ENCODE measurements at regions of chr3 and their contacts with region 1.

Region 1: DNA sequence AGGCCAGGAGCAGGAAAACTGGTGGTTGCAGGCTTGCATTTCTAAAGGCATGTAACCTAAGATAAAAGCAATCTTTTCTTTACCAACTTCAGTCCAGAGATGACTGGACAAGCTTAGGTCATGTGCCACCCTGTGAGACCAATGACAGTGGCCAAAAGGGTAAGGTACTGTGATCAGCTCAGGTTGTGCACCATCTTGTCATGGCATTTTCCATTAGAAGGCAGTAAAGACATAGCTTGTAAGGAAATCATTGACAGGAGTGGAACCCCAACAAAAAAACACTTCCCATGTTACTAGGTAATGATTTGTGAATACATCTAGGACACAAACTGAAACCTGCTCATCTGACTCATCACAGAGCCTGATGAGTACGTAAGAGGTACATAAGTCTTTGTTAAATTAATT is 35.2 kb downstream of the SSR3 start:
- DNase-seq: peak; percentile 25
- ATAC-seq: peak; percentile 70
- H3K4me3 Mint-ChIP-seq: no peak overlapping the region
- H3K27ac Mint-ChIP-seq: no peak overlapping the region
- H3K4me1 Mint-ChIP-seq: peaks cover 19% of the 10 kb centered on the region
- H3K27me3 Mint-ChIP-seq: peaks cover 19% of the 10 kb centered on the region
- CTCF ChIP-seq: no peak

Region 2: GRCh38 chr3:156483961-156484787 is 35.6 kb before region 1 on chr3:
- CTCF ChIA-PET with region 1: interaction called, 5 read pairs
- POLR2A ChIA-PET with region 1: no interaction called
- intact Hi-C with region 1: loop called (anchors 5 kb)
- DNase-seq: peak; percentile 67
- ATAC-seq: peak; percentile 73
- H3K4me3 Mint-ChIP-seq: peak overlapping the region; percentile 68
- H3K27ac Mint-ChIP-seq: peak overlapping the region; percentile 87
- H3K4me1 Mint-ChIP-seq: peaks cover 42% of the 10 kb centered on the region
- H3K27me3 Mint-ChIP-seq: no peaks in the 10 kb centered on the region
- CTCF ChIP-seq: no peak

Measured in activated CD8-positive, alpha-beta T cell treated with anti-CD3 and anti-CD28 coated beads for 36 hours (primary cell).